K562 (cell line): ENCODE measurements at regions of chr17 and their contacts with region 1.

Region 1: GRCh38 chr17:39621523-39622379 is 5.0 kb upstream of the PPP1R1B start:
- DNase-seq: peak; percentile 82 to 88 (median 84)
- ATAC-seq: peak; percentile 84
- H3K4me3 ChIP-seq: no peak overlapping the region
- H3K27ac ChIP-seq: no peak overlapping the region
- H3K4me1 ChIP-seq: peaks cover 3 to 38% of the 10 kb centered on the region in 2 experiments; a peak in 3 of 5 replicates
- H3K27me3 ChIP-seq: peaks cover 3 to 31% of the 10 kb centered on the region in 2 experiments; a peak in 2 of 5 replicates
- CTCF ChIP-seq: peak; percentile 100
- EP300 ChIP-seq: no peak
- POLR2A ChIP-seq: no peak
- RAD21 ChIP-seq: peak; percentile 96 to 98

Region 2: GRCh38 chr17:39209317-39210092 is 412.2 kb before region 1 on chr17:
- CTCF ChIA-PET with region 1: interaction called, 5 read pairs
- POLR2A ChIA-PET with region 1: no interaction called
- in situ Hi-C with region 1: no loop called
- intact Hi-C with region 1: loop called (anchors 5 kb)
- DNase-seq: peak in 3 of 4 experiments; percentile 6 to 41 (median 40)
- ATAC-seq: no peak
- H3K4me3 ChIP-seq: no peak overlapping the region
- H3K27ac ChIP-seq: no peak overlapping the region
- H3K4me1 ChIP-seq: peaks cover 0 to 32% of the 10 kb centered on the region in 2 experiments; a peak in 3 of 5 replicates
- H3K27me3 ChIP-seq: peaks cover 0 to 36% of the 10 kb centered on the region in 2 experiments; a peak in 2 of 5 replicates
- CTCF ChIP-seq: no peak
- EP300 ChIP-seq: no peak
- POLR2A ChIP-seq: no peak
- RAD21 ChIP-seq: no peak

Region 3: DNA sequence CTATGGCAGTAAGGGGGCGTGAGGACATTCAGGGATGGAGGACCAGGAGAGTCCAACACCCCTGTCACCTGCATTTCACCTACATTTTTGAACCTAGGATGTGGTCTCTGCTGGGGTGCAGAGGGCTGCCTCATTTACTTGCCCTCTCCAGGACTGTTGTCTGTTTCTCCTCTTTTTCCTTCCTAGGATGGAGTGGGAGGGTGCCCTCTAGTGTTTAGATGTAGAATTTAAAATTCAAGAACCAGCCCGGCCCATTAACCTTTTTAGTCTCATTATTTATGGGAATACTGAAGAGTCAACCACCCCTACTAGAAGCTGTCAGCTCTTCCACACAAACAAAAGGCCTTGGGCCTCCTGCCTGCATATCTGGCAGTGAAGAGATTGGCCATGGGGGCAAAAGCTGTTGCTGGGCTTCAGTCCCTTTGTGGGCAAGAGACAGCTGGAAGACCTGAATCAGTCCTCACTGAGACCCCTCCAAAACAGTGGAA is 12.7 kb after region 1 on chr17:
- CTCF ChIA-PET with region 1: interaction called, 12 read pairs
- POLR2A ChIA-PET with region 1: interaction called, 4 read pairs
- in situ Hi-C with region 1: no loop called
- intact Hi-C with region 1: no loop called
- DNase-seq: peak; percentile 54 to 64 (median 58)
- ATAC-seq: 0 out of 3 replicates have a peak, but pooled peaks have one; percentile 13
- H3K4me3 ChIP-seq: no peak overlapping the region
- H3K27ac ChIP-seq: no peak overlapping the region
- H3K4me1 ChIP-seq: peaks cover 31 to 44% of the 10 kb centered on the region in 2 experiments
- H3K27me3 ChIP-seq: no peaks in the 10 kb centered on the region
- CTCF ChIP-seq: peak; percentile 79 to 83 (median 81)
- EP300 ChIP-seq: no peak
- POLR2A ChIP-seq: no peak
- RAD21 ChIP-seq: peak in 1 of 2 experiments; percentile 36; a peak in 1 of 4 replicates

Region 4: DNA sequence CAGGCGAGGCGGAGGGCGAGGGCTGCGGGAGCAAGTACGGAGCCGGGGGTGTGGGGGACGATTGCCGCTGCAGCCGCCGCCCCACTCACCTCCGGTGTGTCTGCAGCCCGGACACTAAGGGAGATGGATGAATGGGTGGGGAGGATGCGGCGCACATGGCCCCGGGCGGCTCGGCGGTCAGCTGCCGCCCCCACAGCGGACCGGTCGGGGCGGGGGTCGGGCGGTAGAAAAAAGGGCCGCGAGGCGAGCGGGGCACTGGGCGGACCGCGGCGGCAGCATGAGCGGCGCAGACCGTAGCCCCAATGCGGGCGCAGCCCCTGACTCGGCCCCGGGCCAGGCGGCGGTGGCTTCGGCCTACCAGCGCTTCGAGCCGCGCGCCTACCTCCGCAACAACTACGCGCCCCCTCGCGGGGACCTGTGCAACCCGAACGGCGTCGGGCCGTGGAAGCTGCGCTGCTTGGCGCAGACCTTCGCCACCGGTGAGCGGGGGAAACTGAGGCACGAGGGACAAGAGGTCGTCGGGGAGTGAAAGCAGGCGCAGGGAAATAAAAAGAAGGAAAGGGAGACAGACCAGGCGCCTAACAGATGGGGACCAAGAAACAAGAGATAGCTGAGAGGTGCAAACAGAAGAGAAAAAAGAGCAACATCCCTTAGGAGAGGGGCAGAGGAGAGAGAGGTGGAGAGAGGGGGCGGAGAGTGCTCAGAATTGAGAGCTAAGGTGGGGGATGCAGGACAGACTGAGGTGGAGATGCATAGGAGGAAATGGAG is 46.6 kb after region 1 on chr17 and contains the start of gene PNMT:
- CTCF ChIA-PET with region 1: interaction called, 131 read pairs
- POLR2A ChIA-PET with region 1: interaction called, 4 read pairs
- in situ Hi-C with region 1: loop called (anchors 5 kb)
- intact Hi-C with region 1: loop called (anchors 1 kb)
- DNase-seq: peak; percentile 76 to 89 (median 80)
- ATAC-seq: peak; percentile 72
- H3K4me3 ChIP-seq: peak within 1 kb of the TSS; percentile 51
- H3K27ac ChIP-seq: peak within 1 kb of the TSS; percentile 74
- H3K4me1 ChIP-seq: peaks cover 33 to 94% of the 10 kb centered on the region in 2 experiments
- H3K27me3 ChIP-seq: no peaks in the 10 kb centered on the region
- CTCF ChIP-seq: peak; percentile 66 to 85 (median 75)
- EP300 ChIP-seq: no peak
- POLR2A ChIP-seq: peak; percentile 63; the same call in 1 of the 2 replicates
- RAD21 ChIP-seq: peak; percentile 53 to 66
- polyA plus RNA-seq, gene PNMT: 0.55 to 1.5 TPM

Region 5: GRCh38 chr17:39754161-39754951 is 132.6 kb after region 1 on chr17:
- CTCF ChIA-PET with region 1: interaction called, 118 read pairs
- POLR2A ChIA-PET with region 1: interaction called, 3 read pairs
- in situ Hi-C with region 1: loop called (anchors 5 kb)
- intact Hi-C with region 1: loop called (anchors 1 kb)
- DNase-seq: peak; percentile 84 to 96 (median 96)
- ATAC-seq: peak; percentile 96
- H3K4me3 ChIP-seq: peak overlapping the region; percentile 53
- H3K27ac ChIP-seq: peak overlapping the region; percentile 64
- H3K4me1 ChIP-seq: peaks cover 9 to 43% of the 10 kb centered on the region in 2 experiments; a peak in 4 of 5 replicates
- H3K27me3 ChIP-seq: peaks cover 4 to 6% of the 10 kb centered on the region in 2 experiments; a peak in 2 of 5 replicates
- CTCF ChIP-seq: peak; percentile 82 to 93 (median 92)
- EP300 ChIP-seq: no peak; the same call in 1 of the 2 replicates
- POLR2A ChIP-seq: peak; percentile 66
- RAD21 ChIP-seq: peak; percentile 88 to 95

Region 6: GRCh38 chr17:39980351-39981206 is 358.8 kb after region 1 on chr17 and contains the start of gene PSMD3:
- CTCF ChIA-PET with region 1: interaction called, 3 read pairs
- POLR2A ChIA-PET with region 1: no interaction called
- in situ Hi-C with region 1: no loop called
- intact Hi-C with region 1: loop called (anchors 1 kb)
- DNase-seq: peak; percentile 92 to 99 (median 94)
- ATAC-seq: peak; percentile 93
- H3K4me3 ChIP-seq: peak within 1 kb of the TSS; percentile 98
- H3K27ac ChIP-seq: peak within 1 kb of the TSS; percentile 98
- H3K4me1 ChIP-seq: peaks cover 5 to 12% of the 10 kb centered on the region in 2 experiments; a peak in 3 of 5 replicates
- H3K27me3 ChIP-seq: no peaks in the 10 kb centered on the region
- CTCF ChIP-seq: peak; percentile 89 to 97 (median 92)
- EP300 ChIP-seq: peak; percentile 79
- POLR2A ChIP-seq: peak; percentile 85
- RAD21 ChIP-seq: peak; percentile 87 to 91
- polyA plus RNA-seq, gene PSMD3: 2.0 to 2.8 TPM